Right lobe of liver (tissue), 6 donors: ENCODE measurements at regions of chr19 and their contacts with region 1.

Region 1: GRCh38 chr19:6292006-6292405 is 12.2 kb upstream of the MLLT1 start:
- DNase-seq: no peak
- ATAC-seq: no peak
- H3K4me3 ChIP-seq: no peak overlapping the region
- H3K27ac ChIP-seq: no peak overlapping the region
- H3K4me1 ChIP-seq: no peaks in the 10 kb centered on the region
- H3K27me3 ChIP-seq: no peaks in the 10 kb centered on the region
- CTCF ChIP-seq: no peak
- POLR2A ChIP-seq: no peak

Region 2: GRCh38 chr19:6161271-6161850 is 130.6 kb before region 1 on chr19:
- intact Hi-C with region 1: loop called in 1 of 2 experiments (anchors 10 kb)
- DNase-seq: no peak
- ATAC-seq: peak in 3 of 4 donors; percentile 10 to 27 (median 21)
- H3K4me3 ChIP-seq: no peak overlapping the region
- H3K27ac ChIP-seq: no peak overlapping the region
- H3K4me1 ChIP-seq: no peaks in the 10 kb centered on the region
- H3K27me3 ChIP-seq: no peaks in the 10 kb centered on the region
- CTCF ChIP-seq: no peak
- POLR2A ChIP-seq: no peak

Region 3: GRCh38 chr19:6185835-6186834 is 105.9 kb before region 1 on chr19:
- intact Hi-C with region 1: no loop called
- DNase-seq: no peak
- ATAC-seq: no peak
- H3K4me3 ChIP-seq: no peak overlapping the region
- H3K27ac ChIP-seq: no peak overlapping the region
- H3K4me1 ChIP-seq: no peaks in the 10 kb centered on the region
- H3K27me3 ChIP-seq: no peaks in the 10 kb centered on the region
- CTCF ChIP-seq: no peak
- POLR2A ChIP-seq: no peak